ENCODE measurements at regions of chr2 and their contacts with region 1.

Region 1: GRCh38 chr2:60794277-60794863 is 38.3 kb downstream of the PAPOLG start:
- DNase-seq: no peak
- H3K4me3 ChIP-seq: no peak overlapping the region
- H3K27ac ChIP-seq: no peak overlapping the region
- H3K4me1 ChIP-seq: no peaks in the 10 kb centered on the region
- H3K27me3 ChIP-seq: no peaks in the 10 kb centered on the region
- CTCF ChIP-seq: peak in 2 of 3 donors; percentile 33 to 50
- POLR2A ChIP-seq: no peak

Region 2: DNA sequence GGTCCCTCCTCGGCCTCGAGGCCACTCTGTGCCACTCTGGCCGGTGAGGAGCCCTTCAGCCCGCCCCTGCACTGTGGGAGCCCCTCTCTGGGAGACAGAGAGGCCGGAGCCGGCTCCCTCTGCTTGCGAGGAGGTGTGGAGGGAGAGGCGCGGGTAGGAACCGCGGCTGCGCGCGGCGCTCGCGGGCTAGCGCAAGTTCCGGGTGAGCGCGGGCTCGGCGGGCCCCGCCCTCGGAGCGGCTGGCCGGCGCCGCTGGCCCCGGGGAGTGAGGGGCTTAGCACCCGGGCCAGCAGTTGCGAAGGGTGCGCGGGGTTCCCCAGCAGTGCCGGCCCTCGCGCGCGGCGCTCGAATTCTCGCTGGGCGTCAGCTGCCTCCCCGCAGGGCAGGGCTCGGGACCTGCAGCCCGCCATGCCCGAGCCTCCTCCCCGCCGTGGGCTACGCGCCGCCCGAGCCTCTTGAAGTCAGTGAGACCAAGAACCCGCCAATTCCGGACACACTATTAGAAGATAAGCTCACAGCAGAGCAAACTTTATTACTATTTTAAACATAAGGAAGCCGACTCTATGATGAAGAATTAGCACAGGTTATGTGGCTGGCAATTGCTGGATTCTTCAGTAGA is 1727.5 kb before region 1 on chr2:
- intact Hi-C with region 1: no loop called
- DNase-seq: no peak
- H3K4me3 ChIP-seq: no peak overlapping the region
- H3K27ac ChIP-seq: no peak overlapping the region
- H3K4me1 ChIP-seq: no peaks in the 10 kb centered on the region
- H3K27me3 ChIP-seq: no peaks in the 10 kb centered on the region
- CTCF ChIP-seq: no peak
- POLR2A ChIP-seq: no peak

Region 3: GRCh38 chr2:59490994-59491393 is 1303.4 kb before region 1 on chr2:
- intact Hi-C with region 1: no loop called
- DNase-seq: no peak
- H3K4me3 ChIP-seq: no peak overlapping the region
- H3K27ac ChIP-seq: no peak overlapping the region
- H3K4me1 ChIP-seq: no peaks in the 10 kb centered on the region
- H3K27me3 ChIP-seq: no peaks in the 10 kb centered on the region
- CTCF ChIP-seq: no peak
- POLR2A ChIP-seq: no peak

Region 4: DNA sequence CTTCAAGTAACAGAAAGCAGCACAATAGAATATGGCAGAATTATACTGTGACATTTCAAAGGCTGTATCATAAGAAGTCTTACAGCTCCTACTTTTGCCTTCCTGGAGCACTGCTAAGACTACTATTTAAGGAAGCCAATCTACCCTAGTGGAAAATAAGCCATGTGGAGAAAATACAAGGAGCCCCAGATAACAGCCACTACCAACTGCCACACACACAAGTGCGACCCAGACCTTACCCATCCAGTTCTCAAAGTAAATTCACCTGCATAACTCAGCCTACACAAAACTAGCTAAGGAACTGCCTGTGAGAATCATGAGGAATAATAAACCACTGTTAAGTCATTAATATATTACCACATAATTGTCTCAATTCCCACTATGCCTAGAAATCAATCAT is 610.1 kb after region 1 on chr2:
- intact Hi-C with region 1: loop called (anchors 5 kb)
- DNase-seq: no peak
- H3K4me3 ChIP-seq: no peak overlapping the region
- H3K27ac ChIP-seq: no peak overlapping the region
- H3K4me1 ChIP-seq: no peaks in the 10 kb centered on the region
- H3K27me3 ChIP-seq: no peaks in the 10 kb centered on the region
- CTCF ChIP-seq: no peak
- POLR2A ChIP-seq: no peak

Region 5: DNA sequence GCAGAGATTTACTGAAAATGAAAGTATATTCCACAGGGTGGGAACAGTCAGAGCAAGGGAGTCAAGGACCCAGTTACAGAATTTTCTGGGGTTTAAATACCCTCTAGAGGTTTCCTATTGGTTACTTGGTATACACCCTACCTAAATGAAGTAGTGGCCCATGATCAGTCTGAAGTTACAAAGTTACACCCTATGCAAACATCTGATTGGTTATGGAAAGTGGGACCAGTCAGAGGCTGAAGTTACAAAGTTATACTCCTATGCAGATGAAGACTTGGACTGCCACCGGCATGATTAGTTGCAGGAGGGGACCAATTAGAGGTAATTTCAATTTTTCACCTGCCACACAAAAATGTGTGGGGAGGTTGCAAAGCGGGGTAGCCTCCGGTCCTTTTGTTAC is 620.3 kb after region 1 on chr2:
- intact Hi-C with region 1: no loop called
- DNase-seq: no peak
- H3K4me3 ChIP-seq: no peak overlapping the region
- H3K27ac ChIP-seq: no peak overlapping the region
- H3K4me1 ChIP-seq: peaks cover 0 to 5% of the 10 kb centered on the region in 2 donors
- H3K27me3 ChIP-seq: no peaks in the 10 kb centered on the region
- CTCF ChIP-seq: no peak
- POLR2A ChIP-seq: no peak